CD4-positive, alpha-beta memory T cell (primary cell): ENCODE measurements at regions of chr14 and their contacts with region 1.

Region 1: DNA sequence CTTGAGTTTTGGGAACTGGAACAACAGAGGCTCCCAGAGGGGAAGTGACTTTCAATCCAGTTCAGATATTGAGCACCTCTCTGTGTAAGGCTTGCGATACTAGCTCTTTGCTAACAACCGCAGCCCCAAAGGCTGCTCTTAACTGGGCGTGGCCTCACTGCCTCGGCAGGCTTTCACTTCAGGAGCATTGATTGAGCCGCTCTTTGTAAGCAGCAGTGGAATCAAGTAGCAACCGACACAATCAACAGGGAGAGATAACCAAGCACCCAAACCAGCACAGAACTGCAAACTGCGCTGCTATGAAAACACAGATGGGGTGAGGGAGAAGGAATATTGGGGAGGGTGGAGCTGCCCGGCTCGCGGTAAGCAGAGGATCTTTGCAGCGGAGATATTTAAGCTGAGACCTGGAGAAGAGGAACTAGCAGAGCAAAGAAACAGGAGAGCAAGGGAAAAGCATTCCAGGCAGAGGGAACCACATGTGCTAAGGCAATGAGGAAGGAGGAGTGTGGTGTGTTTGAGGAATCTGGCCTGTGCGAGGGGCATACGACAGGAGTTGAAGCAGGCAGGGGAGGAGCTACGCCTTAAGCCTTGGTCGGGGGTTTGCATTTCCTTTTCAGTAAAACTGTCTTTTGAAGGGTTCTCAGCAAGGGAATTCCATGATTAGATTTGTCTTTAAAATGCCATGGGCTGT is 17.3 kb upstream of the YY1 start:
- DNase-seq: peak; percentile 67 to 81 (median 76)
- H3K4me3 ChIP-seq: peak overlapping the region; percentile 82 to 92
- H3K4me3 Mint-ChIP-seq: no peak overlapping the region
- H3K27ac ChIP-seq: peak overlapping the region; percentile 76
- H3K27ac Mint-ChIP-seq: no peak overlapping the region
- H3K4me1 ChIP-seq: peaks cover 43% of the 10 kb centered on the region
- H3K4me1 Mint-ChIP-seq: peaks cover 7 to 29% (median 18%) of the 10 kb centered on the region in 4 donors
- H3K27me3 ChIP-seq: no peaks in the 10 kb centered on the region
- H3K27me3 Mint-ChIP-seq: no peaks in the 10 kb centered on the region

Region 2: GRCh38 chr14:100147181-100147631 is 74.5 kb before region 1 on chr14:
- CTCF ChIA-PET with region 1: no interaction called
- POLR2A ChIA-PET with region 1: interaction called, 12 read pairs
- intact Hi-C with region 1: no loop called
- DNase-seq: peak; percentile 61 to 82 (median 73)
- H3K4me3 ChIP-seq: no peak overlapping the region
- H3K4me3 Mint-ChIP-seq: peak overlapping the region; percentile 54 to 79 (median 74)
- H3K27ac ChIP-seq: no peak overlapping the region
- H3K27ac Mint-ChIP-seq: peak overlapping the region; percentile 73 to 96 (median 88)
- H3K4me1 ChIP-seq: peaks cover 28% of the 10 kb centered on the region
- H3K4me1 Mint-ChIP-seq: peaks cover 7 to 36% (median 20%) of the 10 kb centered on the region in 4 donors
- H3K27me3 ChIP-seq: no peaks in the 10 kb centered on the region
- H3K27me3 Mint-ChIP-seq: no peaks in the 10 kb centered on the region

Region 3: GRCh38 chr14:100159094-100159864 is 62.4 kb before region 1 on chr14 and contains the start of gene DEGS2:
- CTCF ChIA-PET with region 1: no interaction called
- POLR2A ChIA-PET with region 1: no interaction called
- intact Hi-C with region 1: no loop called
- DNase-seq: peak in 4 of 5 donors; percentile 43 to 54 (median 50)
- H3K4me3 ChIP-seq: peak within 1 kb of the TSS in 1 of 2 donors; percentile 35
- H3K4me3 Mint-ChIP-seq: peak within 1 kb of the TSS; percentile 36 to 78 (median 60)
- H3K27ac ChIP-seq: no peak within 1 kb of the TSS
- H3K27ac Mint-ChIP-seq: peak within 1 kb of the TSS in 1 of 7 donors; percentile 70
- H3K4me1 ChIP-seq: peaks cover 9% of the 10 kb centered on the region
- H3K4me1 Mint-ChIP-seq: peaks cover 0 to 4% (median 1%) of the 10 kb centered on the region in 4 donors
- H3K27me3 ChIP-seq: no peaks in the 10 kb centered on the region
- H3K27me3 Mint-ChIP-seq: peaks cover 11 to 12% of the 10 kb centered on the region in 2 donors
- total RNA-seq, gene DEGS2: 0.14 TPM in 1 of 2 experiments, not detected in the other